ENCODE measurements at regions of chr16 and their contacts with region 1.

Region 1: DNA sequence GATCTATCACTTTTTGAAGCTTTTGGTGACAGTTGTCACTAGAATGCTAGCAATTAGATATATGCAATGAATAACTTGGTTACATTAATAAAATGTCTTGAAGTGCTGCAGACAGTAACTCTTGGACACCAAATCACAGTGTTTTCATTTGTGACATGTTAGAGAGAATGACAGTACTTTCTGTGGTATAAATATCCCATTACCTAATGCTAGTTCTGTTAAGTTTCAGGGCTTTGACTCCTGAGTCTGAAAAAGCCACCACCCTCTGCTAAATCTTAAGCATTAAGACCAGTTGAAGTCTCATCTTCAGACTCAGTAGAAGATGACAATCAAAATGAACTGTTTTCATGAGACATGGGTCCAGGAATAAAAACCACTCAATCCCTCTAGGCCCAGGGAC is 10.6 kb upstream of the CPHXL2 start:
- DNase-seq: no peak
- H3K4me3 ChIP-seq: no peak overlapping the region
- H3K27ac ChIP-seq: no peak overlapping the region
- H3K4me1 ChIP-seq: no peaks in the 10 kb centered on the region
- H3K27me3 ChIP-seq: no peaks in the 10 kb centered on the region
- CTCF ChIP-seq: no peak

Region 2: GRCh38 chr16:75745823-75746222 is 58.5 kb after region 1 on chr16:
- CTCF ChIA-PET with region 1: no interaction called
- POLR2A ChIA-PET with region 1: no interaction called
- intact Hi-C with region 1: loop called (anchors 10 kb)
- DNase-seq: no peak
- H3K4me3 ChIP-seq: no peak overlapping the region
- H3K27ac ChIP-seq: no peak overlapping the region
- H3K4me1 ChIP-seq: no peaks in the 10 kb centered on the region
- H3K27me3 ChIP-seq: no peaks in the 10 kb centered on the region
- CTCF ChIP-seq: no peak

Region 3: GRCh38 chr16:75794426-75794825 is 107.1 kb after region 1 on chr16:
- CTCF ChIA-PET with region 1: no interaction called
- POLR2A ChIA-PET with region 1: no interaction called
- intact Hi-C with region 1: no loop called
- DNase-seq: no peak
- H3K4me3 ChIP-seq: no peak overlapping the region
- H3K27ac ChIP-seq: no peak overlapping the region
- H3K4me1 ChIP-seq: no peaks in the 10 kb centered on the region
- H3K27me3 ChIP-seq: peaks cover 11% of the 10 kb centered on the region
- CTCF ChIP-seq: no peak